ENCODE measurements at regions of chr7 and their contacts with region 1.

Region 1: GRCh38 chr7:97317575-97317974 is 200.1 kb downstream of the SDHAF3 start:
- DNase-seq: no peak
- H3K4me3 ChIP-seq: no peak overlapping the region
- H3K4me3 Mint-ChIP-seq: no peak overlapping the region
- H3K27ac Mint-ChIP-seq: no peak overlapping the region
- H3K4me1 ChIP-seq: no peaks in the 10 kb centered on the region
- H3K4me1 Mint-ChIP-seq: no peaks in the 10 kb centered on the region
- H3K27me3 ChIP-seq: no peaks in the 10 kb centered on the region
- H3K27me3 Mint-ChIP-seq: peaks cover 2% of the 10 kb centered on the region
- CTCF ChIP-seq: no peak

Region 2: GRCh38 chr7:97337849-97338248 is 20.3 kb after region 1 on chr7:
- CTCF ChIA-PET with region 1: no interaction called
- POLR2A ChIA-PET with region 1: no interaction called
- intact Hi-C with region 1: no loop called
- DNase-seq: no peak
- H3K4me3 ChIP-seq: no peak overlapping the region
- H3K4me3 Mint-ChIP-seq: no peak overlapping the region
- H3K27ac Mint-ChIP-seq: no peak overlapping the region
- H3K4me1 ChIP-seq: peaks cover 6% of the 10 kb centered on the region; the same call in 1 of the 2 replicates
- H3K4me1 Mint-ChIP-seq: peaks cover 16% of the 10 kb centered on the region
- H3K27me3 ChIP-seq: no peaks in the 10 kb centered on the region
- H3K27me3 Mint-ChIP-seq: no peaks in the 10 kb centered on the region
- CTCF ChIP-seq: no peak

Region 3: DNA sequence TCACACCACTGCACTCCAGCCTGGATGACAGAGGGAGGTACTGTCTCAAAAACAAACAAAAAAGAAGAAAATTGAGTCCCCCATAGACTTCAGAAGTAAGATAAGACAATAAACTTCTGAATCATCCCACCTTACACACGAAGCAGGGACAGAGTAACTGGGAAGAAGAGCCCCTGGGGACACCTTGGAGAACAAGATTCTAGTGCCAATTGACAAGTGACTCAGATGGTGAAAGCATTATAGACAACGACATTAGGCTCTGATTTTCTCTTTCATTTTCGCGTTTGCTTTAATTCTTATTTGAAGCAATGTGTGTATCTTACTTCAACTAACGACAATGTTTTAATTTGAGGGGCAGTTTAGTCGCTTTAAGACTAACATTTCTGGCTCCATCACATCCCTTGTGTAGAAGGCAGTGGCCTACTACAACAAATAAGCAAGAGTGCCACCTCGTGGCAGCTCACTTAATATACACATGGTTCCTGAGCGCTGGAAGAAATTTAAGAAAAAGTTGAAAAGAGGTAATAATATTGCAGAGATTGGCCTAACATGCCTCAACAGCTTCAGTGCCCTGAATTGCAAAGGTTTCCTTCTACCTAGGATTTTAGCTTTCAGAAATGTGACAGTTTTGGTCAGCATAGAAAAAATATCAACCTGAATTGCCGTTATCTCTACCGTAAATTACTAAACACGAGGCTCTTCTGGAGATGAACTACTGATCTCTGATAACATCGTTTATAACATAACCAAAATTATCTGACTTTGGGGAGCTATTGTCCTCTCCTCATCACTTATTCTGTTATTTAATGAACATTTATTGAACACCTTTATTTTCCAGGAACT is 517.9 kb after region 1 on chr7:
- CTCF ChIA-PET with region 1: no interaction called
- POLR2A ChIA-PET with region 1: no interaction called
- intact Hi-C with region 1: loop called (anchors 10 kb)
- DNase-seq: peak; percentile 62 to 71
- H3K4me3 ChIP-seq: no peak overlapping the region
- H3K4me3 Mint-ChIP-seq: no peak overlapping the region
- H3K27ac Mint-ChIP-seq: no peak overlapping the region
- H3K4me1 ChIP-seq: no peaks in the 10 kb centered on the region
- H3K4me1 Mint-ChIP-seq: no peaks in the 10 kb centered on the region
- H3K27me3 ChIP-seq: no peaks in the 10 kb centered on the region
- H3K27me3 Mint-ChIP-seq: peaks cover 9% of the 10 kb centered on the region
- CTCF ChIP-seq: peak; percentile 60 to 69